Breast epithelium (tissue), 4 donors: ENCODE measurements at regions of chr2 and their contacts with region 1.

Region 1: DNA sequence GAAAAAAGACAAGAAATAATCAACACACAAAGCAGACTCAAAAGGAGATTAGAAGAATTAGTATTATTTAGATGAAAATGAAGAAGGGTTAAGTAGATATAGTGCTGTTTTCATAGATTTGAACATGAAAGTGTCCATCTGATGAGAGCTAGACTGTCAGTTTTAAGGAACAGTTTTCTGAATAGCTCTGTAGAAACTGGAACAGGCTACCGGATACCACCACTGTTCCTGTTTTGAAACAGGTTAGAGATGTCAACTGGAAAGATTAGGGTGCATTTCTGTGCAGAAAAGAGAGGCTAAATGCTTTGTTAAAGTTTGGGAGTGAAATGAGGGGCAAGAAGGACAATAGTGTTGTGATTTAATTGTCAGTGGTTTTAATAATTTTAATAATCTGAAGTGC is 908.8 kb downstream of the CNTNAP5 start:
- DNase-seq: no peak
- H3K4me3 ChIP-seq: no peak overlapping the region
- H3K27ac ChIP-seq: no peak overlapping the region
- H3K4me1 ChIP-seq: no peaks in the 10 kb centered on the region
- H3K27me3 ChIP-seq: no peaks in the 10 kb centered on the region
- CTCF ChIP-seq: no peak
- POLR2A ChIP-seq: no peak

Region 2: DNA sequence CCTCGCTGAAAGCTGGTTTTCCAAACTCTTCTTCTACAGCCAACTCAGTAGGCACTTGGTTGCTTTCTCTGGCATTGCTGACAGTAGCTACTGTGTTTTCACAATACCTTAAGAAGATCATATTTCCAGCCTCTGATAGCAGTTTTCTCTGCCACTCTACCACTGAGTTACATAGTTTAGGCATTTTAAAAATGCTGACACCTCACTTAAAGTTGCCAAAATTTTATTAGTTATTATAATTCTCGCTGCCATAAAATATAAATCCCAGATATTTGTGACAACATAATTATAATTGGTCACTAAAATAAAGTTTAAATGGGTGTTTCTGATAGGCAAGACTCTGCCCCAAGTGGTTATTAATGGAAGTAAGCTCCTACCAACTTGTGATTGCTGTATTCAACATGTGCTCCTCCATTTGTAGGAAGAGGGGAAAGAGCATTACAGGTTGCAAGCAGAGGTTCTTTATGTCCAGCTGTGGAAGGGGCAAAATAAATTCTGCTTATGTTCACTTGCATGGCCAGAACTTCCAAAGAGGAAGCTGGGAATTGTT is 294.0 kb after region 1 on chr2:
- intact Hi-C with region 1: loop called (anchors 10 kb)
- DNase-seq: no peak
- H3K4me3 ChIP-seq: no peak overlapping the region
- H3K27ac ChIP-seq: no peak overlapping the region
- H3K4me1 ChIP-seq: no peaks in the 10 kb centered on the region
- H3K27me3 ChIP-seq: no peaks in the 10 kb centered on the region
- CTCF ChIP-seq: no peak
- POLR2A ChIP-seq: no peak